GM10248 (cell line): ENCODE measurements at regions of chr17 and their contacts with region 1.

Region 1: GRCh38 chr17:29931231-29931932 is 1.4 kb upstream of the SSH2 start:
- DNase-seq: peak; percentile 66
- CTCF ChIP-seq: peak; percentile 76

Region 2: DNA sequence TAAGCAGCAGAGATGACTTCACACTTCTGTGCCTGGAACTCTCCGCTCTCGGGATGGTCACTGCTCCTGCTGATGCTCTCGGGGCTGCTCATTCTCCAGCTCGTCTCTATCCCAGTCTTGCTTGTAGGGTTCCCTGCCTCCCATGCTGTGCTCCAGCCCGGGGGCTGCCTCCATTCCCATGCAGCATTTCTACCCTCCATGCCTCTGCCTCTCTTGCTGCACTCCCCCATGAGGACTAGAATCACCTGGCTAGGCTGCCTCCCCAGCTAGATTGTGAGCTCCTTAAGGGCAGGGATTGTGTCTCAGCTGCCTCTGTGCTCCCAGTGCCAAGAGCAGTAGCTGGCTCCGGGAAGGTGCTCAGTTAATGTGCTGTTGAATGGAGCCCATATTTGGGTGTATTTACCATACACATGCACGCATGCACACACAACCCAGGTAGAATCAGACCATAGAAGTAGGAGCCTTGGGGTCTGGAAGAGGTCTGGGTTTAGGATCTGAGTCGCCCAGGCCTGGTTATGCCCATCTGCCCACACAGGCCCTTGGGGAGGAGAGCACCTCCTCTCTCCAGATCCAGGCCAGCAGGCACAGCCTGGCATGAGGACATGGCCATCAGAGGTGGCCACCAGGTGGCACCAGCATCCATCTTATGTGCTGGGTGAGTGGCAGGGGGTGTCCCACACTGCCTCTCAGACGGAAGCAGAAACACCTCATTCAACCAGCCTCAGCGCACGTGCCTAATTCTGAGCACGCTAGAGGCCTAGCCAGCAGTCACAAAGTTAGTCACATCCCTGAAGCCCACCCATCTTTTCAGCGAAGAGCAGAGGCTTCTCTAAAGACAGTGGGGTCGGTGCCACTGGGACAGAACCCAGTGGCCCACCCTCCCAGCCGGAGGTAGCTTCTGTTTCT is 351.3 kb before region 1 on chr17:
- CTCF ChIA-PET with region 1: interaction called, 27 read pairs
- POLR2A ChIA-PET with region 1: no interaction called
- DNase-seq: peak; percentile 91
- CTCF ChIP-seq: peak; percentile 93

Region 3: DNA sequence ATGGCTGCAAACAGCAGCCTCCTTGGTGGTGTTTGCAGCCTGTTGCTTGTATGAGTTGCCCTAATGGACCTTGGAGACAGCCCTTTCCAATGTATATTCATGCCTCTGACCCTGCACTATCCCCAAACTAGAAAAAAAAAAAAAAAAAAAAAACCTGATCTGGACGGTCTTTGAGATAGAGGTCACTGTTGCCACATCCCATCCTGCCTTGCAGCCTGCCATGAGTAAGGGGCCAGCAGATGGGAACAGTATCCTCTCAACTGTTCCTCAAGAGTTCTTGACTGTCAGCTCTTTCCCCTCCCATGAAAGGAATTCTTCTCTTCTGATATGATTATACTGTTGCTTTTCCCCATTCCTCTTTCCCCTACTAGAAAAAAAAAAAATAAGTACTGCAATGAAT is 153.7 kb before region 1 on chr17:
- CTCF ChIA-PET with region 1: interaction called, 15 read pairs
- POLR2A ChIA-PET with region 1: no interaction called
- DNase-seq: no peak
- CTCF ChIP-seq: no peak

Region 4: GRCh38 chr17:29821897-29822296 is 109.5 kb before region 1 on chr17:
- CTCF ChIA-PET with region 1: interaction called, 271 read pairs
- POLR2A ChIA-PET with region 1: no interaction called
- DNase-seq: no peak
- CTCF ChIP-seq: no peak

Region 5: DNA sequence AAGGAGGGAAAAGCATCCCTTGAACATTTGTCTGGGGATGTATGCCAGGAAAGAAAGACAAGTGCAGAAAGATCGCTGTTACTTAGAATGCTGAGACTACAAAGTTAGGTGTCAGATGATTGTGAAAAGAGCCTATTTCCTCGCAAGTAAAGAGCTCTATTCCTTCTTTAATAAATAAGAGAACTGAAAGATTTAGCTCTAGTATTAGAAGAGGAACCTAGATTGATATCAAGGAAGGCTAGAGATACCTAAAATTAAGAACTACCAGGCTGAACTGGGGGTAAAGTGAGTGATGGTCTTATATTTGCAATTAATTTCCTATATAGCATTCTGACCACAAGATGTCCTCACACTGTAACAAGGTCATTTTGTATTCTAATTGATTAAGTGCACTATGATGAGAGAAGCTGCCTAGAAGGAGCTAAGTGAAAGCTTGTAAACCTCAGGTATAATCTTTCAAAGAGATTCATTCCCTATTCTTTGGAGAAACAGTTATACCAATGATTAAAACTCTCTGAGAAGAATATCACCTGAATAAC is 63.7 kb before region 1 on chr17:
- CTCF ChIA-PET with region 1: interaction called, 24 read pairs
- POLR2A ChIA-PET with region 1: no interaction called
- DNase-seq: no peak
- CTCF ChIP-seq: peak; percentile 33

Region 6: GRCh38 chr17:29918922-29919856 is 12.2 kb before region 1 on chr17:
- CTCF ChIA-PET with region 1: interaction called, 48 read pairs
- POLR2A ChIA-PET with region 1: interaction called, 3 read pairs
- DNase-seq: no peak
- CTCF ChIP-seq: no peak

Region 7: GRCh38 chr17:29977836-29978235 is 46.5 kb after region 1 on chr17:
- CTCF ChIA-PET with region 1: no interaction called
- POLR2A ChIA-PET with region 1: no interaction called
- DNase-seq: no peak
- CTCF ChIP-seq: no peak